Posterior cingulate gyrus (tissue), 11 donors: ENCODE measurements at regions of chr1 and their contacts with region 1.

Region 1: DNA sequence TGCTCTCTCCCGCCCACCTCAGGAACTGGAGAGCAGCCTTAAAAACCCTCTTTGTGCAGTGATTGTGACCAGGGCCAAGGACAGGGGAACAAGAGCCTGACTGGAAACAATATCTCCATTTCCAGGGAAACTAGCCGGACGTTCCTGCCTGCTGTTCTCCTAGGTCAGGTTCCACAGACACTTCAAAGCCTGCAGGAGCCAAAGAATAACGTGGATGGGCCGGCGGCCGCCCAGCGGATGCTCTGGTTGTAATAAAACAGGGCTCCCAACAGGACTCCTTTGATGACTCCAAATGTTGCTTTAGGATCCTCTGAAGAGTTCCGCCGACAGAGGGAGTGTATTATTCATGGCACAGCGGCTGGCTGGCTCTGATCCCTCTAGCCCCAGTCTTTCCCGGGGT is 162.2 kb downstream of the PLXNA2 start:
- DNase-seq: peak in 4 of 10 donors; percentile 28 to 74 (median 50)

Region 2: GRCh38 chr1:208177656-208178055 is 95.7 kb after region 1 on chr1:
- intact Hi-C with region 1: loop called (anchors 10 kb)
- DNase-seq: no peak

Region 3: GRCh38 chr1:208238710-208239472 is 156.9 kb after region 1 on chr1:
- intact Hi-C with region 1: loop called (anchors 5 kb)
- DNase-seq: no peak

Region 4: DNA sequence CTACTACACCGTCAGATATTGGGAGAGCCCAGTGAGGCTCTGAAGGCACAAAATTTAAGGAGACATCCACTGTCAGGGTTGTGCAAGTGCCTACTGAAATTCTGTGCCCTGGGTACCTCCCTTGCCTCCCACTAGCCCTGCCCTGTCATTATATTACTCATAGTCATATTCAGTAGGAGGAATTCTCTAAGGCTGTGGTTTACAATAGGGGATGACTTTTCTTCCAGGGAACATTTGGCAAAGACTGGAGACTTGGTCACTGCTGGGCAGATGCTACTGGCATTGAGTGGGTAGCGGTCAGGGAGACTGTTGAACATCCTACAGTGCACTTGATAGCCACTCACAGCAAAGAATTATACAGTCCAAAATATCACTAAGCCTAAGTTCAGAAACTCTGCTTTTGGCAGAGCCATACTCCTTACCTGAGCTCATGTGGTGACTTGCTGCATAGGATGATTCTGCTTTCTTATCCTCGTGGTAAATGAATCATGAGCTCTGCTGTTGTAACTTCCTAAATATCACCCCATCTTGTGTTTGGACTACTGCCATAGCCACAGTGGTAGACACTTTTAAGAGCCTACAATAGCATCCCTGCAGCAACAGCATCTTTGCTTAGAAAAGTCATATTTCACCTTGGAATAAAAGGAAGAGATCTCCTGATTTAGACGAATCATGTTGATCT is 725.6 kb after region 1 on chr1:
- intact Hi-C with region 1: no loop called
- DNase-seq: no peak